Right cardiac atrium (tissue), 5 donors: ENCODE measurements at regions of chr1 and their contacts with region 1.

Region 1: DNA sequence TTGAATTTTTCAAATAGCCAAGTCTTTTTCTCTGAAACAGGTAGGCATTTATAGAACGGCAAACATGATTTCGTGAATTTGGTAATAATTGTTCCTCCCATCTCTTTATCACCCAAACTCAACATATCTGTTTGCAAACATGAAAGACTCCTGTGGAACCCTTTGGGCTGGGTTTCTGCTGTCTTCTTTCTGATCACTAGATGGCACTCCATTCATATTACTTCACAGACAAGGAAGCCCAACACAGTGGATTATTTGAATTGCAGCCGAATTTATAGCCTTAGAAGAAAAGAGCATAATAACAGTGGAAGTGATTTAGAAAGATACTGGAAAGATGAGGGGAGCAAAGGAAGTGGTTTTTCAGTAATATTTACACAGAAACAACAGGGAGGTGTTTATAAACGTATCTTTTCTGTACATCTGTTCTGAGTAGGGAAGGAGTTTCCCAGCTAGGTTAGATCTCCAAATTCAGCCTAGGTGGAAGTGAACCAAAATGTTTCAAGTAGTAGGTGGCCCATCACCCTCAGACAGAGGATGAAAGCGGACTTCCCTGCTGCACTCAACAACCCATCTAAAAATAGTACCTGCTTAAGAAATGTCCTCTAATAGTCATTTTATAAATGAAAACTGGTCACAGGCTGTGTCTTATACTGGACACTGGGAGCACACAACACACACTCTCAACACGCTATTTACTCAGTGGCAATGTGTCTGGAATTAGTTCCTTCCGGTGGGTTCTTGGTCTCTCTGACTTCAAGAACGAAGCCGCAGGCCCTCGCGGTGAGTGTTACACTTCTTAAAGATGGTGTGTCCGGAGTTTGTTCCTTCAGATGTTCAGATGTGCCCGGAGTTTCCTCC is 67.6 kb downstream of the MAP3K21 start:
- DNase-seq: no peak
- ATAC-seq: peak; percentile 76 to 80
- H3K4me3 ChIP-seq: no peak overlapping the region
- H3K27ac ChIP-seq: no peak overlapping the region
- H3K4me1 ChIP-seq: no peaks in the 10 kb centered on the region
- H3K27me3 ChIP-seq: no peaks in the 10 kb centered on the region

Region 2: GRCh38 chr1:233459470-233459945 is 64.4 kb after region 1 on chr1:
- intact Hi-C with region 1: no loop called
- DNase-seq: no peak
- ATAC-seq: peak in 1 of 2 donors; percentile 14
- H3K4me3 ChIP-seq: no peak overlapping the region
- H3K27ac ChIP-seq: no peak overlapping the region
- H3K4me1 ChIP-seq: no peaks in the 10 kb centered on the region
- H3K27me3 ChIP-seq: no peaks in the 10 kb centered on the region

Region 3: GRCh38 chr1:234065794-234066447 is 670.8 kb after region 1 on chr1:
- intact Hi-C with region 1: loop called in 3 of 4 experiments (anchors 10 kb)
- DNase-seq: peak; percentile 73 to 92 (median 86)
- ATAC-seq: peak in 1 of 2 donors; percentile 70
- H3K4me3 ChIP-seq: no peak overlapping the region
- H3K27ac ChIP-seq: no peak overlapping the region
- H3K4me1 ChIP-seq: no peaks in the 10 kb centered on the region
- H3K27me3 ChIP-seq: no peaks in the 10 kb centered on the region